ENCODE measurements at regions of chr17 and their contacts with region 1.

Region 1: GRCh38 chr17:35063514-35064223 is at the start of gene RFFL:
- DNase-seq: peak; percentile 63 to 97 (median 80)
- ATAC-seq: peak; percentile 97
- H3K4me3 ChIP-seq: peak within 1 kb of the TSS; percentile 43
- H3K4me3 Mint-ChIP-seq: peak within 1 kb of the TSS; percentile 82
- H3K27ac ChIP-seq: peak within 1 kb of the TSS; percentile 62 to 63
- H3K27ac Mint-ChIP-seq: peak within 1 kb of the TSS; percentile 88
- H3K4me1 ChIP-seq: peaks cover 40% of the 10 kb centered on the region
- H3K4me1 Mint-ChIP-seq: peaks cover 75% of the 10 kb centered on the region
- H3K27me3 ChIP-seq: no peaks in the 10 kb centered on the region
- H3K27me3 Mint-ChIP-seq: no peaks in the 10 kb centered on the region
- CTCF ChIP-seq: peak; percentile 63
- total RNA-seq, gene RFFL: 57.8 to 66.1 TPM

Region 2: GRCh38 chr17:34980681-34981537 is 82.8 kb before region 1 on chr17:
- CTCF ChIA-PET with region 1: interaction called, 13 read pairs
- POLR2A ChIA-PET with region 1: interaction called, 7 read pairs
- intact Hi-C with region 1: no loop called
- DNase-seq: peak; percentile 38 to 91 (median 66)
- ATAC-seq: peak; percentile 80
- H3K4me3 ChIP-seq: peak overlapping the region; percentile 90
- H3K4me3 Mint-ChIP-seq: peak overlapping the region; percentile 94
- H3K27ac ChIP-seq: peak overlapping the region; percentile 92 to 97
- H3K27ac Mint-ChIP-seq: peak overlapping the region; percentile 88
- H3K4me1 ChIP-seq: peaks cover 26% of the 10 kb centered on the region
- H3K4me1 Mint-ChIP-seq: peaks cover 56% of the 10 kb centered on the region
- H3K27me3 ChIP-seq: no peaks in the 10 kb centered on the region
- H3K27me3 Mint-ChIP-seq: no peaks in the 10 kb centered on the region
- CTCF ChIP-seq: peak; percentile 56

Region 3: GRCh38 chr17:35022536-35023063 is 41.1 kb before region 1 on chr17:
- CTCF ChIA-PET with region 1: interaction called, 28 read pairs
- POLR2A ChIA-PET with region 1: interaction called, 44 read pairs
- intact Hi-C with region 1: loop called (anchors 1 to 2 kb)
- DNase-seq: peak; percentile 37 to 88 (median 72)
- ATAC-seq: peak; percentile 97
- H3K4me3 ChIP-seq: peak overlapping the region; percentile 15
- H3K4me3 Mint-ChIP-seq: peak overlapping the region; percentile 12
- H3K27ac ChIP-seq: peak overlapping the region; percentile 84 to 87
- H3K27ac Mint-ChIP-seq: peak overlapping the region; percentile 95
- H3K4me1 ChIP-seq: peaks cover 35% of the 10 kb centered on the region
- H3K4me1 Mint-ChIP-seq: peaks cover 63% of the 10 kb centered on the region
- H3K27me3 ChIP-seq: no peaks in the 10 kb centered on the region
- H3K27me3 Mint-ChIP-seq: no peaks in the 10 kb centered on the region
- CTCF ChIP-seq: no peak

Region 4: GRCh38 chr17:35046740-35047283 is 16.9 kb before region 1 on chr17:
- CTCF ChIA-PET with region 1: interaction called, 11 read pairs
- POLR2A ChIA-PET with region 1: interaction called, 77 read pairs
- intact Hi-C with region 1: loop called (anchors 1 kb)
- DNase-seq: peak; percentile 28 to 87 (median 50)
- ATAC-seq: peak; percentile 74
- H3K4me3 ChIP-seq: peak overlapping the region; percentile 37
- H3K4me3 Mint-ChIP-seq: peak overlapping the region; percentile 78
- H3K27ac ChIP-seq: peak overlapping the region; percentile 76 to 82
- H3K27ac Mint-ChIP-seq: peak overlapping the region; percentile 93
- H3K4me1 ChIP-seq: peaks cover 90% of the 10 kb centered on the region
- H3K4me1 Mint-ChIP-seq: peaks cover 79% of the 10 kb centered on the region
- H3K27me3 ChIP-seq: no peaks in the 10 kb centered on the region
- H3K27me3 Mint-ChIP-seq: no peaks in the 10 kb centered on the region
- CTCF ChIP-seq: no peak

Region 5: DNA sequence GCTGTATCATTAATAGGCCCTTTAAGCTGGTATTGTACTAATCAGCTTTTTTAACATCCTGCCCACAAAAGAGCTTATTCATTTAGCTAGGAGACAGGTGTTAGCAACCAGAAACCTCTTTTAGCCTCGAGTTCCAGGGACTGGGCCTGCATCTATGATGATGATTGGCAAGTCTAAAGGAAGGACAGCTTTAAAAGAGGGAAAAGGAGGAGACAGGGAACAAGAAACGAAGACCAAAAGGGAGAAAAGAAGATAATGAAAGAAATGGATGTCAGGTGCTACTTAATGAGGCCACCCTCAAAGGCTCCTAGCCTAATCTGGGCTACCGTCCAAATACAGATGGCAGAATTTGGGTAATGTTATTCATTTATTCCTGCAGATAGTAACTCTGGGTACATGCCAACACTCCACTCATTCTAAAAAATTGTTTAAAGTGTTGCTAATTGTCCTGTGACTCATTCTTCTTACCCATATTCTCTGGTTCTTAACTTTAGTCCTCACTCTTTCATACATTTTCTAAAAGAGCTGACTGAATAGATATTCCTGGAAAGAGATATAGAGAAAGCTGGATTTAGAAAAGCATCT is 18.5 kb after region 1 on chr17:
- CTCF ChIA-PET with region 1: interaction called, 7 read pairs
- POLR2A ChIA-PET with region 1: interaction called, 17 read pairs
- intact Hi-C with region 1: no loop called
- DNase-seq: peak in 3 of 14 experiments; percentile 14 to 65 (median 32)
- ATAC-seq: peak; percentile 60
- H3K4me3 ChIP-seq: no peak overlapping the region
- H3K4me3 Mint-ChIP-seq: peak overlapping the region; percentile 76
- H3K27ac ChIP-seq: peak overlapping the region; percentile 46 to 64
- H3K27ac Mint-ChIP-seq: peak overlapping the region; percentile 79
- H3K4me1 ChIP-seq: peaks cover 46% of the 10 kb centered on the region
- H3K4me1 Mint-ChIP-seq: peaks cover 78% of the 10 kb centered on the region
- H3K27me3 ChIP-seq: no peaks in the 10 kb centered on the region
- H3K27me3 Mint-ChIP-seq: no peaks in the 10 kb centered on the region
- CTCF ChIP-seq: no peak

Measured in CD4-positive, alpha-beta T cell (primary cell).